ENCODE measurements at regions of chr22 and their contacts with region 1.

Region 1: GRCh38 chr22:29306175-29306834 is at the start of gene GAS2L1:
- DNase-seq: peak; percentile 93
- ATAC-seq: peak; percentile 74
- total RNA-seq, gene GAS2L1: 24.4 TPM

Region 2: GRCh38 chr22:29267858-29268417 is 38.4 kb before region 1 on chr22 and contains the starts of genes EWSR1 and RHBDD3:
- intact Hi-C with region 1: loop called (anchors 2 kb)
- DNase-seq: peak; percentile 97
- ATAC-seq: peak; percentile 95
- total RNA-seq, gene EWSR1: 108 TPM
- total RNA-seq, gene RHBDD3: 11.7 TPM

Region 3: DNA sequence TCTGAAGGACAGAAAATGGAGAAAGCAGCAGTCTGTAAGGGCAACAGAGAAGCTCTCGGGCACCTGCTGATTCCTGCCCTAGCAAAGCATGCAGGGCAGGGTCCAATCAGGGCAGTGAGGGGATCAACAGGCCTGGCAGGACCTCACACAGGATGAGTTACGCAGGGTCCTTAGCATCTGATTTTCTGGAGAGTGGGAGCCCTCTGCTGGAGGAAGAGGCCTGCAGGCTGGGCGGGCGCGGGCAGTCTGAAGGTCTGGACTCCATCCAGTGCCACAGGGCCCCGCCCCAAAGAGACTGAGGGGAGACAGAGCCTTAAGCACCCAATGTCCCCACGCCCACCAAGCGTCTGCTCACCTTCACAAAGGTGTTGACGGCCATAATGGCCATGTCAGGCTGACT is 53.2 kb after region 1 on chr22:
- intact Hi-C with region 1: loop called (anchors 5 kb)
- DNase-seq: peak; percentile 78
- ATAC-seq: peak; percentile 87

Region 4: GRCh38 chr22:29487426-29487986 is 181.2 kb after region 1 on chr22:
- intact Hi-C with region 1: no loop called
- DNase-seq: no peak
- ATAC-seq: no peak

Measured in Right ventricle myocardium superior (tissue), 1 donor.